Activated T-helper 1 cell treated with anti-CD3 and anti-CD28 coated beads, Interleukin-12 subunit alpha, Interleukin-12 subunit beta, Interleukin-2, Interleukin-4 antibody, amounts not matched to agents 30 ng/mL and 10 ng/mL and 1 ng/mL, durations not matched to agents 14 hours and 24 hours and 36 hours (primary cell): ENCODE measurements at regions of chr5 and their contacts with region 1.

Region 1: DNA sequence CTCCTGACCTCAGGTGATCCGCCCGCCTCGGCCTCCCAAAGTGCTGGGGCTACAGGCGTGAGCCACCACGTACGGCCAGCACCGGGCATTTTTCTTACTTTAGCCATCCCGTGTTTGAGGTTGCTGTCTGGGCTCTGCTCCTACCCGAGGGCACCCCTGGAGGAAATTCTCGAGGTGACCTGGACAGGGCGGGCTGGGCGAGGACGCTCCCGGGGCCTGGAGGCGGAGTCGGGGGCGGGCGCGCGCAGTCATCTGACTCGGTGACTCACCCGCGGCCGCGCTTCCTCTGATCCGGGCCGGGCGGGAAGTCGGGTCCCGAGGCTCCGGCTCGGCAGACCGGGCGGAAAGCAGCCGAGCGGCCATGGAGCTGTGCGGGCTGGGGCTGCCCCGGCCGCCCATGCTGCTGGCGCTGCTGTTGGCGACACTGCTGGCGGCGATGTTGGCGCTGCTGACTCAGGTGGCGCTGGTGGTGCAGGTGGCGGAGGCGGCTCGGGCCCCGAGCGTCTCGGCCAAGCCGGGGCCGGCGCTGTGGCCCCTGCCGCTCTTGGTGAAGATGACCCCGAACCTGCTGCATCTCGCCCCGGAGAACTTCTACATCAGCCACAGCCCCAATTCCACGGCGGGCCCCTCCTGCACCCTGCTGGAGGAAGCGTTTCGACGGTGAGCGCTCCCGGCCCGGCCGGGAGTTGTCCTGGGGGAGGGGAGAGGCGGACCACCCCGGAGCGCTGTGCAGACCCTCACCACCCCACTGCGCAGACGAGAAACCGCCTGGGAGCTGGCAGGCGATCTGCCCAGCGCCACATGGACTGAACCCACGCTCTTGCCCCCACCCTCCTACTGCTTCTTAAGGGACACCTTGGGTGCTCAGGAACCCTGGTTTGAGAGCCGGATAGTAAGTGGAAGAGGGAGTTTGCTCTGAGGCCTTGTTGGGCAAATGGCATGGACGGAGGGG is at the start of gene HEXB:
- DNase-seq: peak; percentile 83
- H3K4me3 Mint-ChIP-seq: peak within 1 kb of the TSS; percentile 90
- H3K27ac Mint-ChIP-seq: peak within 1 kb of the TSS; percentile 71
- H3K4me1 Mint-ChIP-seq: peaks cover 23% of the 10 kb centered on the region
- H3K27me3 Mint-ChIP-seq: peaks cover 14% of the 10 kb centered on the region
- total RNA-seq, gene HEXB: 62.7 and 71.4 TPM in 2 replicates

Region 2: GRCh38 chr5:74865804-74866595 is 180.8 kb after region 1 on chr5 and contains the start of gene FAM169A:
- intact Hi-C with region 1: loop called (anchors 5 kb)
- DNase-seq: peak; percentile 19
- H3K4me3 Mint-ChIP-seq: peak within 1 kb of the TSS; percentile 88
- H3K27ac Mint-ChIP-seq: peak within 1 kb of the TSS; percentile 76
- H3K4me1 Mint-ChIP-seq: peaks cover 11% of the 10 kb centered on the region
- H3K27me3 Mint-ChIP-seq: peaks cover 25% of the 10 kb centered on the region
- total RNA-seq, gene FAM169A: 3.2 and 3.5 TPM in 2 replicates

Region 3: GRCh38 chr5:75717082-75717922 is 1032.1 kb after region 1 on chr5 and contains the start of gene POC5:
- intact Hi-C with region 1: loop called (anchors 10 kb)
- DNase-seq: peak; percentile 98
- H3K4me3 Mint-ChIP-seq: peak within 1 kb of the TSS; percentile 98
- H3K27ac Mint-ChIP-seq: peak within 1 kb of the TSS; percentile 100
- H3K4me1 Mint-ChIP-seq: peaks cover 34% of the 10 kb centered on the region
- H3K27me3 Mint-ChIP-seq: peaks cover 3% of the 10 kb centered on the region
- total RNA-seq, gene POC5: 20.7 and 24.2 TPM in 2 replicates